ENCODE measurements at regions of chr3 and their contacts with region 1.

Region 1: DNA sequence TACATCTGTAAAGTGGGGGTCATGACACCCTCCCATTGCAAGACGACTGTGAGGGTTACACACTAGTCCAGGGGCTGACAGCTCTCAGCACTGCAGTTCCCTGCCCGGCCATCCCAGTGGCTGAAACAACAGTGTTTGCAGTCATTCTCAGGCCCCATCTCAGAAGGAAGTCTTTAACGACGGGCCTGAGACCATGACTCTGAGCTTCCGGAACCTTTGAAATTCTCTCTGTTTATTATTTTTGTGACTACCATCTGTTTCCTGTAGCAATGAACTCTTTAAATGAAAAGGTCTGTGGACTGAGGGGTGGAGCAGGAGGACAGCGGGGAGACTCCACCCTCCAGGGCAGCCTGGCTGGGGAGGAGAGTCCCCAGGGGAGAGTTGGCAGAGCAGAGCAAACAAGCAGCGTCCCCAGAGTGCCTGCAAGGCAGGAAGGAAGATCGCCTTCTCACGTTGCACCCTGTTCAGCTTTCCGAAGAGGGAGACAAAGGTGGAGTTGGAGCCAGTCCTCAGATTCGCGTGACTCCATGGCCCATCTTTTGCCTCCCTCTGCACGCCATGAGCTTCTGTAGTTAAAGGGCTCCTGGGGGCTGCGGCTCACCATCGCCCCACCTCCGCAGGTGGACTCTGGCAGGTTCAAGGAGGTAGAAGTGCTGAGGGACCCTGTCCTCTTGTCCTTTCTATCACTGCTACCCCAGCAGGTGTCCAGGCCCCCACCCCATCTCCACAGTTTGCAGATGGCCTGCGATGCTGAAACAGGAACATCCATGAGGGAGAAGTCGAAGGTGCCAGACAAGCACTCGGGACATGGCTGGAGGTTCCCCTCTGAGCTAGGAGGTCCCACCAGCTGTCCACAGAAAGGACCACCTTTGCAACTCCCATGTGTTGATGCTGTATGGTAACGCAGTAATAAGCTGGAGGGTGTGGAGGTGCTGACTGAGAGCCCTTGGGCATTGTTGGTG is 525.8 kb upstream of the PROK2 start:
- DNase-seq: peak; percentile 97
- H3K4me3 ChIP-seq: no peak overlapping the region
- H3K27ac ChIP-seq: peak overlapping the region; percentile 57
- H3K4me1 ChIP-seq: peaks cover 18% of the 10 kb centered on the region
- H3K27me3 ChIP-seq: peaks cover 17 to 20% of the 10 kb centered on the region in 2 experiments
- CTCF ChIP-seq: peak in 1 of 2 donors; percentile 37
- POLR2A ChIP-seq: peak; percentile 49

Region 2: GRCh38 chr3:72123908-72124441 is 186.7 kb before region 1 on chr3:
- CTCF ChIA-PET with region 1: no interaction called
- POLR2A ChIA-PET with region 1: no interaction called
- dilution Hi-C with region 1: no loop called
- intact Hi-C with region 1: no loop called
- DNase-seq: peak; percentile 89
- H3K4me3 ChIP-seq: no peak overlapping the region
- H3K27ac ChIP-seq: no peak overlapping the region
- H3K4me1 ChIP-seq: peaks cover 3% of the 10 kb centered on the region
- H3K27me3 ChIP-seq: peaks cover 3 to 5% of the 10 kb centered on the region in 2 experiments
- CTCF ChIP-seq: no peak
- POLR2A ChIP-seq: no peak

Region 3: DNA sequence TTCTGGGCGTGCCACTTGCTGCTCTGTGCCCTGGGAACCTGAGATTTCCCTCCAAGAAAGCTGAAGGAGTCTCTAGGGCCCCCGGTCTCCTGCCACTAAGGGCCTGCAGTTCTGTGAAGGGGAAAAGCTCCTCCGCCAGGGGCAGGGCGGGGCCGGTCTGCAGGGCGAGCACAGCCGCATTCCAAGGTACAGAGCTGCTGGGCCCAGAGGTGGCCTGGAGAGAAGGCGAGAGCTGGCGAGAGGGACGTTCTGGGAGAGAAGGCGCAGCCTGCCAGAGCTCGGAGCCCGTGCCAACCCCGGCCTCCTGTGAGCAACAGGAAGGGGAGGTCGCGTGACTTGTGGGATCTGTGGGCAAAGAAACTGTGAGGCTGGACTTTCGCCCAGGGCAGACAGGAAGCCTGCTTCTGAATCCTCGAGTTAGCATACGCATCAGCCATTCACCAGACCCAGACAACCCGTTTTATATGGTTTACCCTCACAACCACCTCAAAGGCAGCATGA is 37.2 kb after region 1 on chr3:
- CTCF ChIA-PET with region 1: interaction called, 4 read pairs
- POLR2A ChIA-PET with region 1: no interaction called
- dilution Hi-C with region 1: no loop called
- intact Hi-C with region 1: loop called (anchors 2 kb)
- DNase-seq: peak; percentile 92
- H3K4me3 ChIP-seq: no peak overlapping the region
- H3K27ac ChIP-seq: no peak overlapping the region
- H3K4me1 ChIP-seq: peaks cover 7% of the 10 kb centered on the region
- H3K27me3 ChIP-seq: peaks cover 25 to 26% of the 10 kb centered on the region in 2 experiments
- CTCF ChIP-seq: peak in 1 of 2 donors; percentile 26
- POLR2A ChIP-seq: peak; percentile 40

Region 4: DNA sequence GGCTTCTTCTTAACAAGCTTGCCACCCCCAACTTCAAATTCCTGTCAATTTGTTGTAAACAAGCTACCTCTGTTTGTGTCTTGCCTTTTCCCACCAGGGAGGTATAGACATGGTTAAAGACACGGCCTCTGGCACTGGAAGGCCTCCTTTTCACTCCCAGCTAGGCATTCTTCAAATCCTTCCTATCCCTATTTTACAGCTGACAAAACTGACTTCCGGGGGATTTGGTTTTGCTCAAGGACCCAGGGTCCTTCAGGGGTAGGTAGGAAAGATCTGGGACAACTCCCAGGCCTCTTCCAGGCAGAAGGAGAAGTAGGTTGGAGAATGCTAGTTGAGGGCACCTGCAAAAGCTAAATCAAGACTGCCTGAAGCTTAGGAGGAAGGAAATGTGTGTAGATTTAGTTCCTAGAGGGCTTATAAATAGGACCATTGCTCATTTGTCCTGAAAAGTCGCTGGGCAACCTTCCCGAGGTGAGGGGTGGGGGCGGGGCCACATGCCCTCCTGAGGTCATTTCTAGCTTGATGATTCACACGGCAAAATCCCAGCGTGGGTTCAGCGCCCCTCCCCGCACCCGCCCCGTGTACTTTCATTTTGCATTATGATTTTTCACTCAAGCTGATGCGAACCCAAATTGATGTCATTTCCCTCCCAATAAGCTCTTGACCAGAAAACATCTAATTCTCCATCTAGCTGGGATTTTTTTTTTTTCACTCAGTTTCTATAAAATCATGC is 172.1 kb after region 1 on chr3:
- CTCF ChIA-PET with region 1: interaction called, 3 read pairs
- POLR2A ChIA-PET with region 1: no interaction called
- dilution Hi-C with region 1: no loop called
- intact Hi-C with region 1: loop called (anchors 1 kb)
- DNase-seq: peak; percentile 87
- H3K4me3 ChIP-seq: peak overlapping the region; percentile 24 to 73 (median 62)
- H3K27ac ChIP-seq: peak overlapping the region; percentile 44
- H3K4me1 ChIP-seq: peaks cover 15% of the 10 kb centered on the region
- H3K27me3 ChIP-seq: no peaks in the 10 kb centered on the region
- CTCF ChIP-seq: no peak
- POLR2A ChIP-seq: no peak

Measured in endothelial cell of umbilical vein (primary cell).